ENCODE measurements at regions of chr3 and their contacts with region 1.

Region 1: DNA sequence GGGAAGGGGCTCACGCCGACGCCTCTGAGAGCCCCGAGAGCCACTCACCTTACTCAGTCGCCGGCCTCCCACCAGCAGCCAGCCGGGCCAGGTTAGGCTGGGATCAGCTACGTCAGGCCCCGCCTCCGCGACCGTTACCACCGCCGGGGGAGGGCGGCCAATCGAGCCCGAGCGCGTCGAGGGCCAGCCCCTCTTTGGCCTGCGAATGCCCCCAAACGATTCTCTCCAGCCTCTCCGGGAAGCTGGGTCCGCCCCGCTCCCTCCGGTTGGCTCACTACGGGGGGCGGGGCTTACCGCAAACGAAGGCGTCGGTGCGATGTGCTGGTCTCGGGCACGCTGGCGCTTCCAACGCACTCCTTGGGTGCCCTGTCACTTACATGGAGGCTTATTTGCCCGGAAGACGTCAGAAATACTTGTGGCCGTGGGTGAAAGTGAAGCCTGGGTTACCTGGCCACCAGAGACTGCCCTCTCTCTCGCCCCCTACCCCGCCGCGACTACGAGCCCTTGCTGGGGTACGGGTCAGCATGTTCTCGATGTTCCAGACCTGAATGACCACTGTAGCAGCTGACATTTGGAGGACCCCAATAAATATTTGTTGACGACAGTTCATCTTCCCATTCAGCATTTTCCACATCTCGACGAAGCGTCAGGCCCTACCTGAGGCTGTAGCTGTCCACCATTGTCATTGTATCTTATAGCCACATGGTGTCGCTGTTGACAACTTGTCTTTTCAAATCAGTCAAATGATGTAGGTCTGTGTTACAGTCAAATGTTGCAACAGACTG is at the start of gene CEP70:
- DNase-seq: peak; percentile 96
- H3K4me3 ChIP-seq: peak within 1 kb of the TSS; percentile 62
- H3K4me3 Mint-ChIP-seq: peak within 1 kb of the TSS; percentile 98
- H3K27ac Mint-ChIP-seq: peak within 1 kb of the TSS; percentile 95
- H3K4me1 ChIP-seq: peaks cover 6% of the 10 kb centered on the region; the same call in 1 of the 2 replicates
- H3K4me1 Mint-ChIP-seq: no peaks in the 10 kb centered on the region
- H3K27me3 ChIP-seq: no peaks in the 10 kb centered on the region
- H3K27me3 Mint-ChIP-seq: no peaks in the 10 kb centered on the region
- CTCF ChIP-seq: peak; percentile 42 to 86
- total RNA-seq, gene CEP70: 18.5 and 25.0 TPM in 2 replicates

Region 2: GRCh38 chr3:138108099-138108498 is 486.2 kb before region 1 on chr3:
- CTCF ChIA-PET with region 1: no interaction called
- POLR2A ChIA-PET with region 1: no interaction called
- intact Hi-C with region 1: no loop called
- DNase-seq: no peak
- H3K4me3 ChIP-seq: no peak overlapping the region
- H3K4me3 Mint-ChIP-seq: no peak overlapping the region
- H3K27ac Mint-ChIP-seq: no peak overlapping the region
- H3K4me1 ChIP-seq: no peaks in the 10 kb centered on the region
- H3K4me1 Mint-ChIP-seq: no peaks in the 10 kb centered on the region
- H3K27me3 ChIP-seq: no peaks in the 10 kb centered on the region
- H3K27me3 Mint-ChIP-seq: no peaks in the 10 kb centered on the region
- CTCF ChIP-seq: no peak

Region 3: GRCh38 chr3:138479438-138479863 is 114.9 kb before region 1 on chr3:
- CTCF ChIA-PET with region 1: interaction called, 4 read pairs
- POLR2A ChIA-PET with region 1: no interaction called
- intact Hi-C with region 1: loop called (anchors 1 kb)
- DNase-seq: peak in 1 of 2 experiments; percentile 60
- H3K4me3 ChIP-seq: no peak overlapping the region
- H3K4me3 Mint-ChIP-seq: no peak overlapping the region
- H3K27ac Mint-ChIP-seq: no peak overlapping the region
- H3K4me1 ChIP-seq: no peaks in the 10 kb centered on the region
- H3K4me1 Mint-ChIP-seq: no peaks in the 10 kb centered on the region
- H3K27me3 ChIP-seq: no peaks in the 10 kb centered on the region
- H3K27me3 Mint-ChIP-seq: no peaks in the 10 kb centered on the region
- CTCF ChIP-seq: peak; percentile 71 to 81

Region 4: GRCh38 chr3:138608322-138609135 is 14.2 kb after region 1 on chr3 and contains the start of gene FAIM:
- CTCF ChIA-PET with region 1: interaction called, 3 read pairs
- POLR2A ChIA-PET with region 1: interaction called, 6 read pairs
- intact Hi-C with region 1: loop called (anchors 1 kb)
- DNase-seq: peak; percentile 78 to 82
- H3K4me3 ChIP-seq: peak within 1 kb of the TSS; percentile 77
- H3K4me3 Mint-ChIP-seq: peak within 1 kb of the TSS; percentile 91
- H3K27ac Mint-ChIP-seq: peak within 1 kb of the TSS; percentile 94
- H3K4me1 ChIP-seq: no peaks in the 10 kb centered on the region; the same call in 1 of the 2 replicates
- H3K4me1 Mint-ChIP-seq: peaks cover 15% of the 10 kb centered on the region
- H3K27me3 ChIP-seq: no peaks in the 10 kb centered on the region
- H3K27me3 Mint-ChIP-seq: peaks cover 4% of the 10 kb centered on the region
- CTCF ChIP-seq: no peak
- total RNA-seq, gene FAIM: 19.4 and 22.5 TPM in 2 replicates

Region 5: GRCh38 chr3:138834359-138835212 is 240.2 kb after region 1 on chr3 and contains the start of gene PIK3CB:
- CTCF ChIA-PET with region 1: no interaction called
- POLR2A ChIA-PET with region 1: no interaction called
- intact Hi-C with region 1: loop called (anchors 1 kb)
- DNase-seq: peak; percentile 88 to 95
- H3K4me3 ChIP-seq: peak within 1 kb of the TSS; percentile 87
- H3K4me3 Mint-ChIP-seq: peak within 1 kb of the TSS; percentile 86
- H3K27ac Mint-ChIP-seq: peak within 1 kb of the TSS; percentile 92
- H3K4me1 ChIP-seq: peaks cover 7% of the 10 kb centered on the region; the same call in 1 of the 2 replicates
- H3K4me1 Mint-ChIP-seq: peaks cover 4% of the 10 kb centered on the region
- H3K27me3 ChIP-seq: no peaks in the 10 kb centered on the region
- H3K27me3 Mint-ChIP-seq: no peaks in the 10 kb centered on the region
- CTCF ChIP-seq: peak in 1 of 2 experiments; percentile 69
- total RNA-seq, gene PIK3CB: 29.7 and 31.5 TPM in 2 replicates

Region 6: DNA sequence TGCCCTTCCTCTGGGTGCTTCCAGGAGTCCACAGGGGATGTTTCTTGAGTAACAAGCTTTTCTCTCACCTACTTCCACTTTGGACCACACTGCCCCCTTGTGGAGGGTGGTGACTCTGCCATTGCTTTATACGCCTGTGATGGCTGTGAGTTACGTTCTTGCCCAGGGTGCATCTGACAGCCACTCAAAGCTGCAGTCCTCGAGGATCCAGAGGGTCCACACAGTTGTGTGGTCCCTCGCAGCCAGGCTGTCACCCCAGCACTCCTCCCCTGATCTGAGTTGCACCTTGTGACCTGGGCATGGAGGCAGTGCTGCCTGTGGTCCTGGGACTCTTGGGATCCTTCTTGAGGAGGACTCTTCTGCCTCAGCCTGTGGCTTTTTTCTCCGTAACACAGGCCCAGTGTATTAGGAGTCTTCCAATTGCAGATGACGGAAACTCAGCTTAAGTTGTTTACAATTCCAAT is 329.2 kb after region 1 on chr3:
- CTCF ChIA-PET with region 1: interaction called, 37 read pairs
- POLR2A ChIA-PET with region 1: no interaction called
- intact Hi-C with region 1: loop called (anchors 1 kb)
- DNase-seq: peak; percentile 82 to 89
- H3K4me3 ChIP-seq: no peak overlapping the region
- H3K4me3 Mint-ChIP-seq: no peak overlapping the region
- H3K27ac Mint-ChIP-seq: no peak overlapping the region
- H3K4me1 ChIP-seq: no peaks in the 10 kb centered on the region
- H3K4me1 Mint-ChIP-seq: no peaks in the 10 kb centered on the region
- H3K27me3 ChIP-seq: no peaks in the 10 kb centered on the region
- H3K27me3 Mint-ChIP-seq: no peaks in the 10 kb centered on the region
- CTCF ChIP-seq: peak; percentile 81 to 86

Region 7: GRCh38 chr3:139134678-139135372 is 540.5 kb after region 1 on chr3:
- CTCF ChIA-PET with region 1: no interaction called
- POLR2A ChIA-PET with region 1: interaction called, 11 read pairs
- intact Hi-C with region 1: no loop called
- DNase-seq: no peak
- H3K4me3 ChIP-seq: no peak overlapping the region
- H3K4me3 Mint-ChIP-seq: no peak overlapping the region
- H3K27ac Mint-ChIP-seq: no peak overlapping the region
- H3K4me1 ChIP-seq: no peaks in the 10 kb centered on the region
- H3K4me1 Mint-ChIP-seq: no peaks in the 10 kb centered on the region
- H3K27me3 ChIP-seq: peaks cover 1% of the 10 kb centered on the region; the same call in 1 of the 2 replicates
- H3K27me3 Mint-ChIP-seq: no peaks in the 10 kb centered on the region
- CTCF ChIP-seq: no peak

Measured in Caco-2 (cell line).